A673 (cell line): ENCODE measurements at regions of chr9 and their contacts with region 1.

Region 1: DNA sequence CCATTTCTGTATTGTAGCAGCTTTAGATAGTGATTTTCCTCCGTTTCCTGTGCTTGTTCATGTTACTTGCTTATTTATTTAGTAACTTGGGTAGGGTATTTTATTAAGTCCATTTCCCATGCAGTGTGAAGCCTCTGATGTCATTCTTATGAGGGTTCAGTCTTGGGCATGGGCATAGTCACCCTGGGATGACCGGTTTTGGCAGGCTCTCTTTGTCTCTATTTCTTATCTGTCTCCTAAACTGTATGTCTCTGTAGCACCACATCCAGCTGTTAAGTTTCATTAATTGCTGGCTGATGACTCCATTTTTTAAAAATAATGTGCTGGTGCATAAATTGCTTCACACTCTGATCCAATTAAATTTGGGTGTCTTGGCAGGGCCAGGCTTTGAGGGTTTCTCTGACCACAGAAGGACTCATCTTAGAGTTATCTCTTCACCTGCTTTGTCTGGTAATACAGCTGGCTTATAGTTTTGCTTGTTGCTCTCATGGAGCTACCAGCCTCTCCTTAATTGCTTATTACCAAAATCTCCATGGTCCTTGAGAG is 173.3 kb upstream of the VLDLR start:
- DNase-seq: no peak
- H3K4me3 ChIP-seq: no peak overlapping the region
- H3K27ac ChIP-seq: no peak overlapping the region
- H3K4me1 ChIP-seq: no peaks in the 10 kb centered on the region
- H3K27me3 ChIP-seq: no peaks in the 10 kb centered on the region
- CTCF ChIP-seq: no peak

Region 2: GRCh38 chr9:2193552-2193951 is 254.7 kb before region 1 on chr9:
- CTCF ChIA-PET with region 1: no interaction called
- POLR2A ChIA-PET with region 1: no interaction called
- intact Hi-C with region 1: no loop called
- DNase-seq: no peak
- H3K4me3 ChIP-seq: no peak overlapping the region
- H3K27ac ChIP-seq: no peak overlapping the region
- H3K4me1 ChIP-seq: no peaks in the 10 kb centered on the region
- H3K27me3 ChIP-seq: no peaks in the 10 kb centered on the region
- CTCF ChIP-seq: 0 out of 2 replicates have a peak, but pooled peaks have one; percentile 15

Region 3: DNA sequence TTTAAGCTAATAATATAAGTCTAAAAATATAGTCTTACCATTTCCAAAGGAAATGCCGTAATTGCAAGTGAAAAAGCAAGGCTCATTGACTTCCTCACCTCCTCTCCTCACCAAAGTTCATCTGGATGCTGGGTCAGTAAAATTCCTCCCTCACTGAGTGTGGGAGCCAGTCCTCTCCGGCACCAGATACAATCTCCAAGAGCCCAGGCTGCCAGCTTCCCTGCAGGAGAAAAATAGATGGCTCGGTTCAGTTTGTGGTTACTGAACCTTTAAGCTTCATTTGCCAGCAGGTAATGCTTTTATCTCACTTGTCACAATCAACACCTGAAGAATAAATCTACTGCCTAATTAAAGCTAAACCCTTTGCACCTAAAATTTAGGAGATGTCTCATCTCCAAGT is 58.1 kb after region 1 on chr9:
- CTCF ChIA-PET with region 1: no interaction called
- POLR2A ChIA-PET with region 1: no interaction called
- intact Hi-C with region 1: loop called (anchors 10 kb)
- DNase-seq: no peak
- H3K4me3 ChIP-seq: no peak overlapping the region
- H3K27ac ChIP-seq: no peak overlapping the region
- H3K4me1 ChIP-seq: no peaks in the 10 kb centered on the region
- H3K27me3 ChIP-seq: no peaks in the 10 kb centered on the region
- CTCF ChIP-seq: no peak